Activated B cell treated with CpG ODN at 0.5 μM for 24 hours (primary cell): ENCODE measurements at regions of chr1 and their contacts with region 1.

Region 1: DNA sequence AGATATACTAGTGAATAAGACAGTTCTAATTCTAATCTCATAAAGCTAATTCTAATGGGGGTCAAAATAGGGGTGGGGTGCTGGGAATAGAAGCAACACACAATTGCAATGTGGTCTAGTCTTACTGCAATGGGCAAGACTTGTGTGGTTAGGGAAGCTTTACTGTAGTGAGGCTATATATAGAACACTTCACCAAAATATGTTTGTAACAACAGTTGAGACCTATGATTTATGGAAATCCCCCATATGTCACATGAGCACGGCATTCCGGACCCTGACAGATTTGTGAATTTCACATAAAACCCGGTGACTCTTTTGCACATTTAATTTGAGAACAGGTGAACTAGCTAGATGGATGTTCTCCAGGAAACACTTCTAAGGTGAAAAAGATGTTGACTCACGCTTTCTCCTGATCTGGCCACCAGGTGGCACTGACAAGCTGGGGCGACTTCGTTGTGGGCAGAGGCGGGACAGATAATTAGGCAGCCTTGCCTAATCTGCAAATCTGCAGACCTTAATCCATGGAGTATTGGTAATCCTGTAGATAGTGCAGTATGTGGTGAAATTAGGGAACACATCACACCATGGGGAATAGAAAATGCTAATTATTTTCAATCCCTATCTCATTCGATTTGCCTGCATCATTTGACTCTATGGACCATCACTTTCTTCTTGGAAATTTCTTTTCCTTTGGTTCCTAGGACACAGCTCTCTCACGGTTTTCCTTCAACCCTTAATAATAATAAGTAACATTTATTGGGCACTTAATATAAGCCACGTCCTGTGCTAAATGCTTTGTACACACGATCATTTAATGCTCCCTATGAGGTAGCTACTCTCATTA is 37.7 kb downstream of the KIAA0040 start:
- DNase-seq: peak; percentile 55
- ATAC-seq: peak; percentile 67
- H3K4me3 Mint-ChIP-seq: no peak overlapping the region
- H3K27ac Mint-ChIP-seq: no peak overlapping the region
- H3K4me1 Mint-ChIP-seq: peaks cover 28% of the 10 kb centered on the region
- H3K27me3 Mint-ChIP-seq: peaks cover 18% of the 10 kb centered on the region
- CTCF ChIP-seq: peak; percentile 70

Region 2: GRCh38 chr1:175192630-175193526 is 38.0 kb after region 1 on chr1 and contains the start of gene KIAA0040:
- CTCF ChIA-PET with region 1: interaction called, 24 read pairs
- POLR2A ChIA-PET with region 1: interaction called, 8 read pairs
- intact Hi-C with region 1: loop called (anchors 2 kb)
- DNase-seq: peak; percentile 54
- ATAC-seq: peak; percentile 53
- H3K4me3 Mint-ChIP-seq: peak within 1 kb of the TSS; percentile 99
- H3K27ac Mint-ChIP-seq: peak within 1 kb of the TSS; percentile 97
- H3K4me1 Mint-ChIP-seq: peaks cover 92% of the 10 kb centered on the region
- H3K27me3 Mint-ChIP-seq: no peaks in the 10 kb centered on the region
- CTCF ChIP-seq: no peak
- total RNA-seq, gene KIAA0040: 55.5 and 57.2 TPM in 2 replicates

Region 3: GRCh38 chr1:175307160-175307559 is 152.3 kb after region 1 on chr1:
- CTCF ChIA-PET with region 1: interaction called, 25 read pairs
- POLR2A ChIA-PET with region 1: no interaction called
- intact Hi-C with region 1: no loop called
- DNase-seq: no peak
- ATAC-seq: peak; percentile 65
- H3K4me3 Mint-ChIP-seq: peak overlapping the region; percentile 44
- H3K27ac Mint-ChIP-seq: peak overlapping the region; percentile 43
- H3K4me1 Mint-ChIP-seq: peaks cover 49% of the 10 kb centered on the region
- H3K27me3 Mint-ChIP-seq: no peaks in the 10 kb centered on the region
- CTCF ChIP-seq: no peak

Region 4: GRCh38 chr1:175373786-175374623 is 219.2 kb after region 1 on chr1:
- CTCF ChIA-PET with region 1: interaction called, 15 read pairs
- POLR2A ChIA-PET with region 1: no interaction called
- intact Hi-C with region 1: no loop called
- DNase-seq: no peak
- ATAC-seq: peak; percentile 31
- H3K4me3 Mint-ChIP-seq: no peak overlapping the region
- H3K27ac Mint-ChIP-seq: no peak overlapping the region
- H3K4me1 Mint-ChIP-seq: no peaks in the 10 kb centered on the region
- H3K27me3 Mint-ChIP-seq: peaks cover 3% of the 10 kb centered on the region
- CTCF ChIP-seq: no peak

Region 5: DNA sequence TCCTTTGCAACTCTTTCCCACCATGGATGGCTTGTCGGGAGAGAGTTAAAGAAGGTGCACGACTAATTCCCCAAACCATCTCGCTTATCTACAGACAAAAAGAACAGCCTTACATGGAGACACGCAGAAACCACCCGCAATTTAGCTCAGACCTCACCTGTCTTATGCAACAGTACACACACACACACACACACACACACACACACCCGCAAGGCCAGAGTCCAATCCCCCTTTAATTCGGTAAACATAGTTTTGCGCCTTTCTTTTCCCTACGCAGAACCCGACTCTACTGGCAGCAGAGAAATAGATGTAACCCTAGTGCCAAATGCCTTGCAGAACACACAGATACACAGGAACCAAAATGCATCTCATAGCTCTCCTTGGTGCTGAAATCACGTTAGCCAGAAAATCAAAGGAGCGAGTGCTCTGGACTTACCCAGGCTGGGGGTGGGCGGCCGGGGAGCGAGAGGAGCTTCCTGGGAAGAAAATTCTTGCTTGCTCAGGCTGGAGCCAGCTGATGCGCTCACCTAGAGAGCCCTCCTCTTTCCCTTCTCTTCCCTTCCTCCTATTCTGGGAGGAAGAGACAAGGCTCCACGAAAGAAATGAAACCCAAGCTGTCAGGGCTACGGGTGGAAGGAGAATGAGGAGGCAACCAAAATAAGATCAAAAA is 588.1 kb after region 1 on chr1:
- CTCF ChIA-PET with region 1: interaction called, 24 read pairs
- POLR2A ChIA-PET with region 1: no interaction called
- intact Hi-C with region 1: loop called (anchors 1 kb)
- DNase-seq: no peak
- ATAC-seq: no peak
- H3K4me3 Mint-ChIP-seq: no peak overlapping the region
- H3K27ac Mint-ChIP-seq: no peak overlapping the region
- H3K4me1 Mint-ChIP-seq: peaks cover 3% of the 10 kb centered on the region
- H3K27me3 Mint-ChIP-seq: peaks cover 29% of the 10 kb centered on the region
- CTCF ChIP-seq: no peak

Region 6: DNA sequence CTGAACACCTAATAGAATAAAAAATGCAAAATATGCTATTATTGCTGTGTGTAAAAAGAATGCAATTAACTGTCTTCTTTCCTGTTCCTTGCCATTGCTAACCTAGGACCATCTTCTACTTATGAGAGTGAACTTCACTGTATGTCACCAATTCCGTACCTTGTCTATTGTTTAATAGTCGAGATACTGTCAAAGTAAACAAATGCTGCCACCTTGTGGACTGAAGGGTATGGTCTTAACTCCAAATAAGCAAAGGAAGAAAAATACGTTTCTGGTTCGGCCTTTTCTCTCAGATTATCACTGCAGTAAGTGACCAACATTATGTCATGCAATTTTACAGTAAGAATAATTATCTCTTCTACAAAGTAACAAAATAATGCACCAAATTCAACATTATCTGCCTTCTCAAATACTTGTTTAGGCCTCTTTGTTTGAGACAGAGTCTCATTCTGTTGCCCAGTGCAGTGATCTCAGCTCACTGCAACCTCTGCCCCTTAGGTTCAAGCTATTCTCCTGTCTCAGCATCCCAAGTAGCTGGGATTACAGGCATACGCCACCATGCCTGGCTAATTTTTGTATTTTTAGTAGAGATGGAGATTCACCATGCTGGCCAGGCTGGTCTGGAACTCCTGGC is 918.8 kb after region 1 on chr1:
- CTCF ChIA-PET with region 1: interaction called, 5 read pairs
- POLR2A ChIA-PET with region 1: no interaction called
- intact Hi-C with region 1: loop called (anchors 1 kb)
- DNase-seq: no peak
- ATAC-seq: no peak
- H3K4me3 Mint-ChIP-seq: no peak overlapping the region
- H3K27ac Mint-ChIP-seq: no peak overlapping the region
- H3K4me1 Mint-ChIP-seq: peaks cover 7% of the 10 kb centered on the region
- H3K27me3 Mint-ChIP-seq: no peaks in the 10 kb centered on the region
- CTCF ChIP-seq: no peak